ENCODE measurements at regions of chr7 and their contacts with region 1.

Region 1: GRCh38 chr7:143408686-143409561 is at the start of gene EPHA1:
- DNase-seq: peak; percentile 75
- H3K4me3 ChIP-seq: peak within 1 kb of the TSS; percentile 31 to 62 (median 52)
- H3K27ac ChIP-seq: peak within 1 kb of the TSS; percentile 50 to 82 (median 78)
- H3K4me1 ChIP-seq: peaks cover 10 to 38% (median 28%) of the 10 kb centered on the region in 4 donors
- H3K27me3 ChIP-seq: no peaks in the 10 kb centered on the region
- CTCF ChIP-seq: peak; percentile 31 to 61 (median 45)
- EP300 ChIP-seq: no peak
- POLR2A ChIP-seq: no peak
- total RNA-seq, gene EPHA1: 21.1 to 29.9 (median 24.8) TPM

Region 2: DNA sequence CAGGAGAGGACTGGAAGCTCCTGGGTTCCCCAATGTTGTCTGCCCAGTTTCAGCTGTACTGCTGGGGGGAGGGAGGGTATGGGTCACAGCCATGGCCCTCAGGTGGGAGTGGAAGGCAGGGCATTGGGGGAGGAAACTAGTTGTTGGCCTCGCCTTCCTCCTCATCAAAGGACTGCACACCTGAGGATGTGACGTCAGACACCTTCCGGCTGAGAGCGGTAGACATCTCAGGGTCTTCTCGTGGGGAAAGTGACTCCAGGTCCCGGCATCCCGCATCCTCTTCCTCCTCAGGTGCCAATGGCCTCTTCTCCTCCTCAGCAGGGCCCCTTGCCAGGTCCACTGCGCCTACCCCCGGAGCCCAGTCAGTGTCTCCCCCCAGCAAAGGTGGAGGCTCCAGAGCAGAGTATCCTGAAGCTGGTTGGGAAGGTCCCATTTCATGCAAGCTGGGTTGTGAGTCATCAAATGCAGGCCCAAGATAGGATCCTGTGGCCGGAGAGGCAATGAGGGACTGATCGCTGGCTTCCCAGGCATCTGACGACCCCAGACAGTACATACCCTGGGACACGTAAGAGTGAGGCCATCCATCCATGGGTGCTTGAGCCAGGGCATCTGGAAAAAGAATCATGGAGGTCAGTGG is 52.4 kb before region 1 on chr7:
- in situ Hi-C with region 1: no loop called
- intact Hi-C with region 1: loop called (anchors 1 kb)
- DNase-seq: no peak
- H3K4me3 ChIP-seq: no peak overlapping the region
- H3K27ac ChIP-seq: no peak overlapping the region
- H3K4me1 ChIP-seq: peaks cover 0 to 5% (median 4%) of the 10 kb centered on the region in 4 donors
- H3K27me3 ChIP-seq: peaks cover 13% of the 10 kb centered on the region
- CTCF ChIP-seq: no peak
- EP300 ChIP-seq: no peak
- POLR2A ChIP-seq: no peak